Activated naive CD4-positive, alpha-beta T cell treated with anti-CD3 and anti-CD28 coated beads for 36 hours (primary cell): ENCODE measurements at regions of chr5 and their contacts with region 1.

Region 1: DNA sequence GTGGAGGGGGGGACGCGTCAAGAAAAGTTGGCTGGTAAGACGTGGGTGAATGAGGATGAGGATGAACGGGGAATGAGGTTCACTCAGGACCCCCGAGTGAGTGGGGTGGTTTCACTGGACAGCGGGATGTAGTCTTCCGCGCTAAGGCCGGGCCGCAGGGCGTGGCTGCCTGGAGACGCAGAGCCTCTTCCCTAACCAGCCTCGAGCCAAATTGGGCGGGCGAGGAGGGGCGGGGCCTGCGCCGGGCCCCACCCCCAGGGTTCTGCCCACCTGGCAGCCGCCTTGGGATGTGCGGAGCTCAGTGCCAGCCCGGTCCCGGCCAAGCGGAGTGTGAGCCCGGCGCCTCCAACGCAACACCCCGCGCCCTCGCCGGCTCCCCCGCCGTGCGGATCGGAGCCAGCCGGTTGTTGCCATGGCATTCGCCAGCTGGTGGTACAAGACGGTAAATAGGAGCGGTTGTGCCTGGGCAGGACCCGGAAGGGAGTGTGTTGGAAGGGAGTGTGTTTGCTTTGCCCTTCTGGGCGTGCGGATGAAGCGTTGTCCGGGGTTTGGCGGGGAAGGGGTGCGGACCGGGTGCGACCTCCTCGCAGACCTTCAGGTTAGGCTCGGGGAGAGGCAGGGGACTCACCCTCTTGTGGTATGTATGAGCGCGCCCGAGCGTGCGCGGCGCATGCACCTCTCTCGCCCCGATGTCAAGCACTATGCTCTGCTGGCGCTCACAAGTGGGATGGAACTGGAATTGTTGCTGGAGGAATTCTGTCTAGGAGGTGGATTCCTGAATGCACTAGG is 743 bp downstream of the CAST start:
- DNase-seq: peak; percentile 89
- H3K4me3 Mint-ChIP-seq: peak overlapping the region; percentile 96
- H3K27ac Mint-ChIP-seq: peak overlapping the region; percentile 96
- H3K4me1 Mint-ChIP-seq: peaks cover 22% of the 10 kb centered on the region
- H3K27me3 Mint-ChIP-seq: peaks cover 3% of the 10 kb centered on the region

Region 2: DNA sequence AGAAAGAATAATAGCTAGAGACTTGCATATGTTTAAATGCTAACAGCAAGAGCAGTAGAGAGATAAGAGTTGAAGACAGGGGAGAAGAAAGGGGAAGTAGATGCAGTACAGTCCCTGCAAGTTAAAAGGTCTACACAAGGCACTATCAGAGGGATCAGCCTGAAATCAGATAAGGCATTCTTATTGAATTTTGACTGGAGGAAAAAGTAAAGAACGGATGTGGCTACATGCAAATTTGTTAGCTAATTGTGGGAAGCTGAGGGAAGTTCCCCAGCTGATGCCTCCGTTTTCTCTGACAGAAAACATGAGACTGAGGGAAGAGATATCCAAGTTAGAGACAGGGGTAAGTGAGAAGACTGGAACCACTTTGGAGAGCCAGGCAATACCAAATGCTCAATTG is 944.7 kb before region 1 on chr5:
- CTCF ChIA-PET with region 1: no interaction called
- intact Hi-C with region 1: loop called (anchors 5 kb)
- DNase-seq: peak; percentile 60
- H3K4me3 Mint-ChIP-seq: no peak overlapping the region
- H3K27ac Mint-ChIP-seq: no peak overlapping the region
- H3K4me1 Mint-ChIP-seq: peaks cover 22% of the 10 kb centered on the region
- H3K27me3 Mint-ChIP-seq: peaks cover 11% of the 10 kb centered on the region

Region 3: GRCh38 chr5:95858661-95859326 is 804.1 kb before region 1 on chr5:
- CTCF ChIA-PET with region 1: no interaction called
- intact Hi-C with region 1: loop called (anchors 2 kb)
- DNase-seq: peak; percentile 98
- H3K4me3 Mint-ChIP-seq: peak overlapping the region; percentile 30
- H3K27ac Mint-ChIP-seq: peak overlapping the region; percentile 83
- H3K4me1 Mint-ChIP-seq: peaks cover 52% of the 10 kb centered on the region
- H3K27me3 Mint-ChIP-seq: no peaks in the 10 kb centered on the region

Region 4: DNA sequence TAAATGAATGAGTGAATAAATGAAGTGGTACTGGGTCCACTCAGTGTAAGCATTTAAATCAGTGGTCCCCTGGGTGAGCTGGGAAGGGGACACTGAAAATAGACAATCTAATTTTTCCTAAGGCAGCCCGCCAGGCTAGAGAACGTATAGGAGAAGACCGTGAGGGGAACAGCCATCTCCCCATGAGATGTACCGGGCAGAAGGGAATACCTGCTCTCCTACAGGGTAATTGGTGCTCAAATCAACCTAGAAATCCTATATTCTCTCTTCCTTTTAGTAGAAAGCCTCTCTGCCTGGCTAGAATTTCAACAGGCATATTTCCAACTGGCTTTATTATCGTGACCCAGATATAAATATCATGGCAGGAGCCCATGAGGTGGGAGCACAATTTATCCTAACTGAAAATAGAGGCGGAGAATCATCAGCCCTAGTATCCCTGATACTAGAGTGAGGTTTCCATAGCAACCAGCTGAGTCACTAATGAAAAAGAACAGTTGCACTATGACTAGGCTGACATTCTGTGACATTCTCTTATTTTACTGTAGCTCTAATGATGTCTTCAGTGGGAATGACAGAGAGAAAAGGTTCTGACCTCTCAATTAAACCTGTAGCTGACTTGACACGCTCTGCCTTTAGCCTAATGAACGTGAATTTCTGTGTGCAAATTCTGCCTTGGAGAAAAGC is 97.2 kb before region 1 on chr5:
- CTCF ChIA-PET with region 1: no interaction called
- intact Hi-C with region 1: no loop called
- DNase-seq: no peak
- H3K4me3 Mint-ChIP-seq: no peak overlapping the region
- H3K27ac Mint-ChIP-seq: no peak overlapping the region
- H3K4me1 Mint-ChIP-seq: peaks cover 11% of the 10 kb centered on the region
- H3K27me3 Mint-ChIP-seq: peaks cover 5% of the 10 kb centered on the region

Region 5: DNA sequence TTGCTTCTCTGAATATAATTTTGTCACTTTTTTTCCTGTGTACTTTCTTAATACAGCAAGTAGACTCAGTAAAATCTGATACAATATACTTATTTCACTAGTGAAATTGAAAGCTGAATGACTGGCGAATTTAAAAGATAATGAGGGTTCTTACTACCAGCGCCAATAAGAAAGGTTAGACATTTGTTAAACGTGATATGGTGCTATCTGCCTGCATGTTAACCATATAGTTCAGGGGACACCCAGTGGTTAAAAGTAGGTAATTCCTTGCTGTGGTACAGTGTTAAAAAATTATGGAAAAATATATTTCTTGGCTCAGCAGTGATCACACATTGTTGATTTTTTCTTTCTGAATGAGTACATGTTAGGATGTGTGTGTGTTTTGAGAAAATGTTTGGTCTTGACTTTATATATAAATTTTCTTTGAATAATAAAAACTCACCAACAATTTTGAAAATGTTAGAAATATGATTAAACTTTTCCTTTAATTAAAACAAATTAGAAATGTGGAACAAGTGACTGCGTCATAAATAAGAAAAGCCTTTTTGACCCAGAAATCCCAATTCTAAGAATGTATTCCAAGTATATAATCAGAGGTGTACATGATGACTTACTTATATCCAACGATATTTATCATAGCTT is 25.0 kb after region 1 on chr5:
- CTCF ChIA-PET with region 1: interaction called, 4 read pairs
- intact Hi-C with region 1: loop called (anchors 1 kb)
- DNase-seq: no peak
- H3K4me3 Mint-ChIP-seq: no peak overlapping the region
- H3K27ac Mint-ChIP-seq: no peak overlapping the region
- H3K4me1 Mint-ChIP-seq: peaks cover 14% of the 10 kb centered on the region
- H3K27me3 Mint-ChIP-seq: no peaks in the 10 kb centered on the region

Region 6: GRCh38 chr5:96807075-96807654 is 144.2 kb after region 1 on chr5:
- CTCF ChIA-PET with region 1: no interaction called
- intact Hi-C with region 1: loop called (anchors 1 kb)
- DNase-seq: peak; percentile 48
- H3K4me3 Mint-ChIP-seq: peak overlapping the region; percentile 86
- H3K27ac Mint-ChIP-seq: peak overlapping the region; percentile 97
- H3K4me1 Mint-ChIP-seq: peaks cover 80% of the 10 kb centered on the region
- H3K27me3 Mint-ChIP-seq: no peaks in the 10 kb centered on the region

Region 7: DNA sequence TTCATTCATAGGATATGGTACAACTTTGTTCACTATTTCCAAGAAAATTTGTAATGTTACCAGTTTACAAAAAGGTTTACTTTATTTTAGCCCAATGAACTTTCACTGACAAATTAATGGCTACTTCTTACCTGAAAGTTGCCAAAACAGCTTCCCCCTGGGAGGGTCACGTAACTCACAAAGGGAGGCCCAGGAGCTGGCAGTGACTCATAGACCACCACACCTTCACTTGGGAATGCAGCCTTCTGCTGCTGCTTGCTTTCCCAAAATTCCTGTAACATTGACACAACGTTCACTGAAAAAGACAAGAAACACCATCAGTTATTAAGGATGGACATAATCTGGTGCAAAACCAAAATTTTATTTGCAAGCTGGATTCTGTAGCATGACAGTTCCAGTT is 461.4 kb after region 1 on chr5:
- CTCF ChIA-PET with region 1: no interaction called
- intact Hi-C with region 1: no loop called
- DNase-seq: no peak
- H3K4me3 Mint-ChIP-seq: no peak overlapping the region
- H3K27ac Mint-ChIP-seq: no peak overlapping the region
- H3K4me1 Mint-ChIP-seq: no peaks in the 10 kb centered on the region
- H3K27me3 Mint-ChIP-seq: peaks cover 10% of the 10 kb centered on the region

Region 8: DNA sequence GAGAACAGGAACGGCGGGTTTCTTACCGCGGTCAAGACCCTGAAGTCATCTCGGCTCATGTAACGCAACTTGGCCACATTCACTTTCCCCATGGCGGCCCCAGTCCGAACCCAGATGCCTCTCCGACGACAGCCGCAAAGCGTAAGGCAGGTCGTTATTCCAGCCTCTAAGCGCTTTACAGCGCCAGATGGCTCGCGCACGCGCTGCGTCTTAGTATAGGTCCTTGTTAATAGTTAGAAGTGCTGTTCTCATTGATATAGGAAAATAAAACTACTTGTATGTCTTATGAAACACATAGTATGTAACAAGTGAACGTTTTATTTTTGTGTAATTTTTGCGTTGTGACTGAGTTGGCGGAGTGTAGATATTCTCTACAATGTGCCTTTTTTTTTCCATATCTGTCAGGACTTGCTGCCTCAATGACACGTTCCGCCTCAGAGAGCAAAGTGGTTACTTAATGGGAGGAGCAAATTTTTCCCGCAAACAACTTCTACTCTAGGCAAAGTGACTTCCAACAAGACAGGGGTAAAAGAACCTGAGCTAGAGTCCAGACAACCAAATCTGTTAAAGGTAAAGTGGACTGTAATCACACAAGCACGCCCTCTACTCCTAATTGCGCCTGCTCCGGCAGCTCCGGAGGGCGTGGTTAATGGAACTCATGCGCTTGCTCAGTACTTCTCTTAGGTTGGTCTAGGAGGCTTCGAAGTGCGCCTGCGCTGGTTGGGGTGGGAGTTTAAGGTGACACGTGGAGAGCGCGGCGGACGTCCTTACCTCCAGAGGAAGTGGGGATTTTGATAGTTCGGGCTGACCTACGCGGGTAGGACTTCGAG is 520.4 kb after region 1 on chr5 and contains the start of gene RIOK2:
- CTCF ChIA-PET with region 1: no interaction called
- intact Hi-C with region 1: loop called (anchors 1 kb)
- DNase-seq: peak; percentile 97
- H3K4me3 Mint-ChIP-seq: peak within 1 kb of the TSS; percentile 93
- H3K27ac Mint-ChIP-seq: peak within 1 kb of the TSS; percentile 99
- H3K4me1 Mint-ChIP-seq: peaks cover 33% of the 10 kb centered on the region
- H3K27me3 Mint-ChIP-seq: no peaks in the 10 kb centered on the region
- total RNA-seq, gene RIOK2: 29.1 to 32.0 TPM